ENCODE measurements at regions of chr14 and their contacts with region 1.

Region 1: DNA sequence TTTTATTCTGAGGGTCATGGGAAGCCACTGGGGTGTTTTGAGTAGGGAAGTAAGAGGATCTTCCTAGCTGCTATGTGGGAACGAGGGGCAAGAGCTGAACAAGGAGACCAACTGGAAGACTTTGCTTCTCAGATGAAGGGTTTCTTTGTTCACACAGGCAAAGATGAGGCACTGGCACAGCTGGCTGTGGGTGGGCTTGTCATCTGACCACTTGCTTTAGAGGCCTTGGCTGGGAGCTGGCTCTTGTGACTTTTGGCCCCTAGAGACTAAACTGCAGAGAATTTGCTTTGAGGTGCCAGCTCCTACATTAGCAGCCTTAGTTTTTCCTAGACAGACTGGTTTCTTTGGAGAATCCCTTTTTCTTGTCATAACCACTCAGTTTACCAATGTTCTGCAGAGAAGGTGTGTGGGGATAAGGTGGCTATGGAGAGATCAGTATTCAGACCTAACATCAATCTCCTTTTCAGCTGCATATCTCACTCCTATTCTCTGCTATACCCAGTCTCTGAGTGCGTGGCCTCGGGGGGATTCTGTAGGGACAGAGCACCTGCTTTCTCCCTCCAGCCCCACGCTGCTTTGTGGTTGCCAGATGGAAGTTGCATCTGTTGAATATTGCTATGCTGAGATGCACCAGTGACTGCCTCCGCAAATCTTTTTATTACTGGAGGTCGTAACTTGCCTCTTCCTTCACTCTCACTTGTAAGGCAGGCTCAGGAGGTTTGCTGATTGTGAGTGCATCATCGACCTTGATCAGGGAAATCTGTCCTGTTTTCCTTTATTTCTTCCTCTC is 12.7 kb downstream of the PPP2R5C start:
- DNase-seq: no peak
- H3K4me3 Mint-ChIP-seq: no peak overlapping the region
- H3K27ac Mint-ChIP-seq: no peak overlapping the region
- H3K4me1 Mint-ChIP-seq: peaks cover 40% of the 10 kb centered on the region
- H3K27me3 Mint-ChIP-seq: peaks cover 1% of the 10 kb centered on the region

Region 2: DNA sequence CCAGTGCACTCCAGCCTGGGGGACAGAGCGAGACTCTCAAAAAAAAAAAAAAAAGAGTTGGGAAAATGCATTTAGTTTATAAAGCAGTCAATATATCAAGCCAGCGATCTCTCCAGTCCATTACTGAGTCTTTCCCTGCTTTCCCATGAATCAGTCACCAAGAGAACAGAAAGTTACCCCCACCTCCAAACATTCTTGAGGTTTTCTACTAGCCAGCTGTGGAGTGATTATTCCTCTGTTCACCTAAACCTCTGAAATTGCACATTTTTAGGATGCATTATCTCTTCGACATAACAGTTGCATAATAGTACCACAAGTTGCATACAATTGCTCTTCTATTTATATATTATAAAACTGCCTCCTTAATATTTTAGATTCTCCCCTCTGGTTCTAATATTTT is 347.7 kb before region 1 on chr14:
- intact Hi-C with region 1: no loop called
- DNase-seq: no peak
- H3K4me3 Mint-ChIP-seq: no peak overlapping the region
- H3K27ac Mint-ChIP-seq: no peak overlapping the region
- H3K4me1 Mint-ChIP-seq: no peaks in the 10 kb centered on the region
- H3K27me3 Mint-ChIP-seq: peaks cover 23% of the 10 kb centered on the region

Region 3: GRCh38 chr14:101695659-101696058 is 78.5 kb before region 1 on chr14:
- intact Hi-C with region 1: no loop called
- DNase-seq: no peak
- H3K4me3 Mint-ChIP-seq: no peak overlapping the region
- H3K27ac Mint-ChIP-seq: no peak overlapping the region
- H3K4me1 Mint-ChIP-seq: no peaks in the 10 kb centered on the region
- H3K27me3 Mint-ChIP-seq: peaks cover 43% of the 10 kb centered on the region

Region 4: DNA sequence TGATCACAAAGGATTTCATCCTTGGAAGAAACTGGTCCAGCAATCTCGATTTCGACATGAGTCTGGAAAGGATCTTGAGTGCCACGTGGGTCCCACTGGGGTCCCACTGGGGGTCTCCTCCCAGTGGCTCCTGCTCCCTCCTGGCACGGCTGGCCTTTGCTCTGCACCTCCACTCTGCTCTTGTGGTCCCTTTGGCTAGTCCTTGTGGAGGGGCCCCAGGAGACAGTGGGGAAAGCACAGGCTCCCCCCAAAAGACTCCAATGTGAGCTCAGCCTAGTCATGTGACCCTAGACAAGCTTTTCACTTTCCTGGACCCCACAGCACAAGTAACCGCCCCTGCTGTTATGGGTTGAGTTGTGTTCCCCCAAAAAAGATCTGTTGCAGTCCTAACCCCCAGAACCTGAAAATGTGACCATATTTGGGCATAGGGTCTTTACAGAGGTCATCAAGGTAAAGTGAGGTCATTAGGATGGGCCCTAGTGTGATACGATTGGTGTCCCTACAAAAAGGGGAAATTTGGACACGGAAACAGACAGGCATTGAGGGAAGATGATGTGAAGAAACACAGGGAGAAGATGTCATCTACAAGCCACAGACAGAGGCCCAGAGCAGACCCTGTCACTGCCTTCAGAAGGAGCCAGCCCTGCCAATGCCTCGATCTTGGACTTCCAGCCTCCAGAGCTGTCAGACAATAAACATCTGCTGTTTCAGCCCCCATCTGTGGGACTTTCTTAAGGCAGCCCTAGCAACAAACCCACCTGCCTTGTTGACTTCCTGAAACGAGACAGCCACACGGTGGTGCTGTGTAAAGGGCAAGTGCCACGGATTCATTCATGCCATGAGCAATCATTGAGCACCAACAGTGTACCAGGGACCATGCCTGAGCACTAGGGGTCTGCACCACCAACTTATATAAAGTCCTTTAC is 36.5 kb before region 1 on chr14:
- intact Hi-C with region 1: no loop called
- DNase-seq: no peak
- H3K4me3 Mint-ChIP-seq: no peak overlapping the region
- H3K27ac Mint-ChIP-seq: no peak overlapping the region
- H3K4me1 Mint-ChIP-seq: peaks cover 19% of the 10 kb centered on the region
- H3K27me3 Mint-ChIP-seq: peaks cover 4% of the 10 kb centered on the region

Region 5: GRCh38 chr14:101876555-101876938 is 102.3 kb after region 1 on chr14:
- intact Hi-C with region 1: loop called (anchors 1 kb)
- DNase-seq: peak; percentile 46
- H3K4me3 Mint-ChIP-seq: peak overlapping the region; percentile 65
- H3K27ac Mint-ChIP-seq: peak overlapping the region; percentile 81
- H3K4me1 Mint-ChIP-seq: peaks cover 80% of the 10 kb centered on the region
- H3K27me3 Mint-ChIP-seq: no peaks in the 10 kb centered on the region

Measured in activated T-helper 1 cell treated with anti-CD3 and anti-CD28 coated beads, Interleukin-12 subunit alpha, Interleukin-12 subunit beta, Interleukin-2, Interleukin-4 antibody, amounts not matched to agents 30 ng/mL and 10 ng/mL and 1 ng/mL, durations not matched to agents 14 hours and 24 hours and 36 hours (primary cell).